GM18951 (cell line): ENCODE measurements at regions of chr9 and their contacts with region 1.

Region 1: GRCh38 chr9:17793713-17794622 is 215.1 kb downstream of the SH3GL2 start:
- POLR2A ChIP-seq: no peak

Region 2: DNA sequence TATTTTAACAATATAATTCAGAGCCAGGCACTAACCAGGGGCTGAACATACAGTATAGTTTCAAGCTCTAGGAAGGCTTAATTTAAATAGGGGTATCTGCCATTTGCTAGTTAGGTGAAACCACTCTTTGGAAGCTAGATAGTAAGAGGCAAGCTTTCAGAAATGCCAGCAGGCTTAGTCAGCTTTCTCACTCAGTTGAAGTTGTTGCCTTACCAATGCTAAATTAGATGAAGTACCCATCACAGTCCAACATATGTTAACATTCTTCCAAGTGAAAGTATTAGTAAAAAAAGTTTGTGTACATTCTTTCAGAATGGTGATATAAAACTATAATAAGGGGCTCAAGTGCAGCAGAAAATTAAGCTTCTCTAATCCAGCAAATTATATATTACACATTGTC is 444.1 kb before region 1 on chr9:
- in situ Hi-C with region 1: no loop called
- POLR2A ChIP-seq: no peak

Region 3: DNA sequence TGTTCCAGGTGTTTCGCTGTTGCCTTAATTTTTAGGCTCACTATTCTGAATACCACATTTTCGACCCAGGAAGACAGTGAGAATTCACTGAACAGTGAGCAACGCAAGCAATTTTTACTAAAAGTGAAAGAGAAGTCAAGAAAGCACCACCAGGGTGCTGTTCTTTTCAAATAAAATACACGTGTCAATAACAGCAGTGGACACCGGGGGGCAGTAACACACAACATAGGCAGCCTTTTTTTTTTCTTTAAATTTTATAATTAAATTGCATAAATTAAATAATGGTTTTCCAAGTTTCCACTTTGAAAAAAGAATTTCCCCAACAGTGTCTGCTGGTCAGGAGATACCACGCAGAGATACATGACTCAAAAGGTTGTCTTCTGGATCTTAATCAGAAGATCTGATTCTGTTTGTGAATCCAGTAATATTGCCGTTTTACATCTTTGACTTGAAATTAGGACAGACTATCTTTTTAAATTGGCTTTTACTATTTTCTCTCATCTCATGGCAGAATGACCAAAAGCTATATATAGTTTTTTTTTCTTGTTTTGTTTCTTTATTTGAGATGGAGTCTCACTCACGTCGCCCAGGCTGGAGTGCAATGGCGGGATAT is 262.2 kb before region 1 on chr9:
- in situ Hi-C with region 1: loop called (anchors 10 kb)
- POLR2A ChIP-seq: no peak